ENCODE measurements at regions of chr10 and their contacts with region 1.

Region 1: GRCh38 chr10:103685880-103686669 is 169.3 kb downstream of the SH3PXD2A start:
- DNase-seq: peak; percentile 42
- ATAC-seq: peak; percentile 90
- H3K4me3 ChIP-seq: no peak overlapping the region
- H3K27ac ChIP-seq: no peak overlapping the region
- H3K4me1 ChIP-seq: no peaks in the 10 kb centered on the region
- H3K27me3 ChIP-seq: no peaks in the 10 kb centered on the region
- CTCF ChIP-seq: peak; percentile 99

Region 2: GRCh38 chr10:103598654-103599115 is 87.4 kb before region 1 on chr10:
- CTCF ChIA-PET with region 1: interaction called, 16 read pairs
- POLR2A ChIA-PET with region 1: no interaction called
- in situ Hi-C with region 1: no loop called
- intact Hi-C with region 1: loop called (anchors 1 kb)
- DNase-seq: peak; percentile 30
- ATAC-seq: peak; percentile 92
- H3K4me3 ChIP-seq: no peak overlapping the region
- H3K27ac ChIP-seq: no peak overlapping the region
- H3K4me1 ChIP-seq: no peaks in the 10 kb centered on the region; the same call in 1 of the 2 replicates
- H3K27me3 ChIP-seq: no peaks in the 10 kb centered on the region
- CTCF ChIP-seq: peak; percentile 91

Region 3: GRCh38 chr10:103605359-103606095 is 80.5 kb before region 1 on chr10:
- CTCF ChIA-PET with region 1: interaction called, 15 read pairs
- POLR2A ChIA-PET with region 1: no interaction called
- in situ Hi-C with region 1: no loop called
- intact Hi-C with region 1: no loop called
- DNase-seq: peak; percentile 8
- ATAC-seq: peak; percentile 55
- H3K4me3 ChIP-seq: no peak overlapping the region
- H3K27ac ChIP-seq: no peak overlapping the region
- H3K4me1 ChIP-seq: no peaks in the 10 kb centered on the region
- H3K27me3 ChIP-seq: no peaks in the 10 kb centered on the region
- CTCF ChIP-seq: peak; percentile 82

Region 4: GRCh38 chr10:103699611-103700435 is 13.7 kb after region 1 on chr10:
- CTCF ChIA-PET with region 1: interaction called, 10 read pairs
- POLR2A ChIA-PET with region 1: no interaction called
- in situ Hi-C with region 1: no loop called
- intact Hi-C with region 1: no loop called
- DNase-seq: no peak
- ATAC-seq: no peak
- H3K4me3 ChIP-seq: no peak overlapping the region
- H3K27ac ChIP-seq: no peak overlapping the region
- H3K4me1 ChIP-seq: peaks cover 7% of the 10 kb centered on the region
- H3K27me3 ChIP-seq: no peaks in the 10 kb centered on the region
- CTCF ChIP-seq: no peak; the same call in 1 of the 2 replicates

Region 5: DNA sequence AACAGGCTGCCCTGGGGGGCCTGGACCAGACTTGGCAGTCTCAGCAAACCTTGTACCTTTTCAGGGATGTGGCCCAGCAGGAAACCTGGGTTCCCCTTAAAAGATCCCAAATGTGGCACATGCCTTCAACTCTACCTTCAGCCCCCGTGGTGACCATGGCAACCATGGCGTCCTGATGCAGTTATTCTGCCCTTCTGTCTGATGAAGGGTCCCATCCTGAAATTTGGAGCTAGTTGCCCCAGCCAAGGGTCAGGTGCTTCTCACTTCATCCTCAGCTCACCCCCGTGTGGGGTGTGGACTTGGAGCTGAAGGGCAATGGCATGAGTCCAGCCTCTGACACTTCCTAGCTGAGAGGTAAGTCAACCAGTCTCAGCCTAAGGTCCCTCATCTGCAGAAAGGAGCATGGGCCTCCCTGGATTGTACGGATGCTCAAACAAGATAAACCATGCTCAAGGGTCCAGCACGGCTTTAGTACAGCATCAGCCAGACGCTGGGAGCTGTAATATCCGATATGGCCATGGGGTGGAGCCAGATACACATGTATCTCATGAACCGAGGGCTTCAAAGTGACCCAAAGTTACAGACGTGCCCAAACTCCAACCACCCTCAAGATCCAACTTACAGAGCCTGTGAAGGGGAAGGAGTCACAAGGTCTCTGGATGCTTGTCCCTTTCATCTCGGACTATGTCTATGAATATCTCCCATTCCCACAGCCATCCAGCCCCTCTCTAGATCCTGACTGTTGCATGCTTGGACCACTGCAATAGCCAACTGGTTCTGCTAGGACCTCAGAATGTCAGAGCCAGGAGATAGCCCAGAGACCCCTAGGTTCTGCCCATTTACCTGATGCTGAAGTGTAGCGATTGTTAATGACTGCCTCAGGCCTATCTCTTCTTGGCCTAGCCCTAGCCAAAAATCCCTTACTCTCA is 26.8 kb after region 1 on chr10:
- CTCF ChIA-PET with region 1: interaction called, 10 read pairs
- POLR2A ChIA-PET with region 1: no interaction called
- in situ Hi-C with region 1: no loop called
- intact Hi-C with region 1: no loop called
- DNase-seq: peak; percentile 67
- ATAC-seq: peak; percentile 84
- H3K4me3 ChIP-seq: no peak overlapping the region
- H3K27ac ChIP-seq: no peak overlapping the region
- H3K4me1 ChIP-seq: peaks cover 4% of the 10 kb centered on the region; the same call in 1 of the 2 replicates
- H3K27me3 ChIP-seq: no peaks in the 10 kb centered on the region
- CTCF ChIP-seq: peak; percentile 91

Measured in Panc1 (cell line).